Breast epithelium (tissue), 4 donors: ENCODE measurements at regions of chr3 and their contacts with region 1.

Region 1: GRCh38 chr3:156615592-156616173 is 58.7 kb upstream of the TIPARP start:
- DNase-seq: peak in 1 of 2 donors; percentile 47
- H3K4me3 ChIP-seq: no peak overlapping the region
- H3K27ac ChIP-seq: no peak overlapping the region
- H3K4me1 ChIP-seq: no peaks in the 10 kb centered on the region
- H3K27me3 ChIP-seq: no peaks in the 10 kb centered on the region
- CTCF ChIP-seq: no peak
- POLR2A ChIP-seq: no peak

Region 2: DNA sequence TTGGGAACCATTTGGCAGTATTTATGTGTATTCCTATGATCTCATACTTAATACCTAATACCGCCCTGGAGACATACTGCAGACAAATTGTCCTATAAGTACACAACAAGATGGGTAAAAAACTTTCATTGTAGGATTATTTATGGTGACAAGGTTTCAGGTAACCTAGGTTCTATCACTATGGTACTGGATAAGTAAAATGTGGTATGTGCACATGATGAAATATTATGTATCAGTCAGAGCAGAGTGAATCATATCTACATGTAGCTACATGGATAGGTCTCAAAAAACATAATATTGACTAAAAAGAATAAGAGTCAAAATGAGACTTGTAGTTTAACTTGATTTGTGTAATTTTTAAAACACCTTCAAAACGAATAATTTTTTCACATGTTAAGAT is 358.3 kb after region 1 on chr3:
- intact Hi-C with region 1: loop called (anchors 5 kb)
- DNase-seq: no peak
- H3K4me3 ChIP-seq: no peak overlapping the region
- H3K27ac ChIP-seq: no peak overlapping the region
- H3K4me1 ChIP-seq: no peaks in the 10 kb centered on the region
- H3K27me3 ChIP-seq: no peaks in the 10 kb centered on the region
- CTCF ChIP-seq: no peak
- POLR2A ChIP-seq: no peak